ENCODE measurements at regions of chr16 and their contacts with region 1.

Region 1: GRCh38 chr16:30032083-30032819 is 1.2 kb upstream of the TLCD3B start:
- DNase-seq: peak in 1 of 2 donors; percentile 42
- ATAC-seq: peak in 1 of 2 donors; percentile 53
- H3K4me3 ChIP-seq: no peak overlapping the region
- H3K27ac ChIP-seq: no peak overlapping the region
- H3K4me1 ChIP-seq: peaks cover 0 to 15% of the 10 kb centered on the region in 2 donors
- H3K27me3 ChIP-seq: peaks cover 30 to 55% (median 39%) of the 10 kb centered on the region in 3 donors
- CTCF ChIP-seq: peak; percentile 5 to 70 (median 52)
- POLR2A ChIP-seq: no peak

Region 2: GRCh38 chr16:29678691-29679267 is 353.5 kb before region 1 on chr16 and contains the start of gene QPRT:
- in situ Hi-C with region 1: loop called in 1 of 4 experiments (anchors 25 kb)
- intact Hi-C with region 1: no loop called
- DNase-seq: no peak
- ATAC-seq: no peak
- H3K4me3 ChIP-seq: peak within 1 kb of the TSS in 3 of 4 donors; percentile 6 to 18 (median 17)
- H3K27ac ChIP-seq: peak within 1 kb of the TSS in 2 of 4 donors; percentile 52 to 54
- H3K4me1 ChIP-seq: no peaks in the 10 kb centered on the region
- H3K27me3 ChIP-seq: no peaks in the 10 kb centered on the region
- CTCF ChIP-seq: no peak
- POLR2A ChIP-seq: no peak
- total RNA-seq, gene QPRT: 0.78 to 2.5 (median 1.5) TPM

Region 3: GRCh38 chr16:29700253-29700987 is 331.8 kb before region 1 on chr16:
- in situ Hi-C with region 1: loop called in 3 of 4 experiments (anchors 5 to 25 kb)
- intact Hi-C with region 1: no loop called
- DNase-seq: peak; percentile 60 to 68
- ATAC-seq: peak; percentile 92 to 95
- H3K4me3 ChIP-seq: no peak overlapping the region
- H3K27ac ChIP-seq: no peak overlapping the region
- H3K4me1 ChIP-seq: no peaks in the 10 kb centered on the region
- H3K27me3 ChIP-seq: no peaks in the 10 kb centered on the region
- CTCF ChIP-seq: peak; percentile 80 to 96 (median 82)
- POLR2A ChIP-seq: no peak

Region 4: DNA sequence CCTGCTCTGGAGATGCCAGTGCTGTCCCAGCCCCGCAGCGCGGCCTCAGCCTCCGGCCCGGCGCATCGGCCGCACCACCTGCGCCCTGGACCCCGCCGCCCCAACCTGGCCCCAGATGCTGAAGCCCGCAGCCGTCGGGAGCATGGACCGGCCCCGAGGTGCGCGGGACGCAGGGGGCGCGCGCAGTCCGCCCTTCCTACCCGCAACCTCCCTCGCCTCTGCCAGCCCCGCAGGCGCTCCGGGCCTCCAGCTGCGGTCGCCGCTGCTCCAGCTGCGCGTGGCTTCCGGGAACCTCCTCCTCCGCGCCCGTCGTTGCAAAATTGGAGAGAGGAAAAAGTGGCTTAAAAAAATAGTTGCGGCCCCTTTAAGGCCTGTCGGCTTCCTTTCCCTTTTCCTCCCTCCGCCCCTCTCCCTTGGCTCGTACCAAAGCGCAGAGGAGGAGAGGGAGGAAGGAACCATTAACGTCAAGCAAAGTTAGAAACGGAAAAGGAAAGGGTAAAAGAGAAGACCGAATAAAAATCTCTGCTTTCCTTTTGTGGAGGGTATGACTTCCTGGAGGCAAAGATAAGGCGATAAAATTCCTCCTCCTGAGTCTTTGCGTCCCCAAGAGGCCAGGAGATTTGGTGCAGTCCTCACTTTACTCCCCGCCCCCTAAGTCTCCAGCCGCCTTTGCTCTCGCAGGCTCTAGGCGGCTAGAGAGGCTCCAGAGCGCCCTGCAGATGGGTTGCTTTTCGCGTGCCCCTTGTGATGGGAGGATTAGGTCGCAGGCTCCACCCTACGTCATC is 169.2 kb before region 1 on chr16 and contains the start of gene CDIPT:
- in situ Hi-C with region 1: no loop called
- intact Hi-C with region 1: loop called (anchors 10 kb)
- DNase-seq: peak; percentile 92 to 94
- ATAC-seq: peak; percentile 99
- H3K4me3 ChIP-seq: peak within 1 kb of the TSS; percentile 78 to 98 (median 80)
- H3K27ac ChIP-seq: peak within 1 kb of the TSS; percentile 87 to 96 (median 93)
- H3K4me1 ChIP-seq: peaks cover 18 to 20% of the 10 kb centered on the region in 2 donors
- H3K27me3 ChIP-seq: no peaks in the 10 kb centered on the region
- CTCF ChIP-seq: peak; percentile 32 to 64 (median 57)
- POLR2A ChIP-seq: peak; percentile 36 to 41
- total RNA-seq, gene CDIPT: 35.5 to 71.8 (median 55.7) TPM

Region 5: DNA sequence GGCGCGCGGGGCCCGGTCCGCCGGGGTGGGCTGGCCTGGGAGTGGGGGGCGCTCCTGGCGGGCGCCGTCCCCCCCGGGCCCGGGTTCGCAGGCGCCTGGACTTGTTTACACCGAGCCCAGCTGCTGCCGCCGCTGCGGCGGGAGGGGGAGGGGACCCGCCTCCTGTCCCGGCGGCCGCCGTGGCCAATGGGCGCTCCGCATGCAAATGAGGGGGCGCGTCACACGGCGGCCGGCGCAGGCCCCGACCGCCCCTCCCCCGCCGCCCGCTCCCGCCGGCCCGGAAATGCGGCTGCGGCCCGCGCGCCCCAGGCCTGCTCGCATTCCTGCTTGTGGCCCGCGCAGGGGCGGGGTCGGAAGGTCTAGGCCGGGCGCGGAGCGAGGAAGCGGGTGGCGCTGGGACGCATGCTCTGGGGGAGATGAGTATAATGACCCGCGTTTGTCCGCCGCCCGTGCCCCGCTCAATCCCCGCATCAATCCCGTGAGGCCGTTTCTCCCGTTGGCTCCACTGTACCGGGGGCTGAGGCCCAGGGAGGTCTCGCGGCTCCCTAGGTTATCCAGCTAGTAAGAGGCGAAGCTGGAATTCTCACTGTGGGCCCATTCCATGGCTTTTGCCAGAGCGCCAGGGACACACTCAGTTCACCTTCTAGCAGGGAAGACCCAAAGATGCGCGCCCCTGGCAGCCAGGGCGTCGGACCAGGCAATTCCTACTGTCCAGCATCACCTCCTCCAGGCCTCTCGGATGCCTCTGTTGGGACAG is 64.0 kb after region 1 on chr16 and contains the start of gene YPEL3:
- in situ Hi-C with region 1: no loop called
- intact Hi-C with region 1: no loop called
- DNase-seq: peak; percentile 91 to 94
- ATAC-seq: peak; percentile 72 to 74
- H3K4me3 ChIP-seq: peak within 1 kb of the TSS; percentile 74 to 87 (median 82)
- H3K27ac ChIP-seq: peak within 1 kb of the TSS; percentile 89 to 99 (median 96)
- H3K4me1 ChIP-seq: peaks cover 31 to 37% of the 10 kb centered on the region in 2 donors
- H3K27me3 ChIP-seq: no peaks in the 10 kb centered on the region
- CTCF ChIP-seq: no peak
- POLR2A ChIP-seq: peak; percentile 74 to 92
- total RNA-seq, gene YPEL3: 97.2 to 197 (median 154) TPM